Activated CD4-positive, alpha-beta memory T cell treated with anti-CD3 and anti-CD28 coated beads, Interleukin-2, amount 10 ng/mL, durations not matched to agents 7 days and 5 days (primary cell): ENCODE measurements at regions of chr1 and their contacts with region 1.

Region 1: DNA sequence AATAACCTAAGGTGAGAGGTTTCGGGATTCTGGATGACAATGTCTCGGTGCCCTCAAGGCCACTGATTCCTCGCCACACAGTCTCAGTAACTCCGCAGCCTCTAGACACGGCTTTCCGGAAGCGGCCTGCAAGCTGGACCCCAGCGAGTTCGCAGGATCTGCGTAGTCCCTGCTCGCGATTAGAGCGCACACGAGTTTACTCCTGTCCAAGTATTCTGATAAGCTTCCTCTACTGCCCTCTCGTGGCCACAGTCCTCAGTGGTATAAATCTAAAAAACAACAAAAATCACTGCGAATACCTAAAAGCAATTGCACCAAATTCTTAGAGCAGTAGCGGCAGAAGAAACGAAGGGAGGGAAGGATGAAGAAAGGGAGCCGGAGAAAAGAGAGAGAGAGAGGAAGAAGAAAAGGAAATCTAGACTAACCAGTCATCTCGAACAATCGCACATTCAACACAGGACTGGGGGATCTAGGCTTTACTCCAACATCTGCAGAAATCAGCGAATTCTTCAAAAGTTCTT is 1.1 kb upstream of the PLXNA2 start:
- DNase-seq: peak; percentile 81
- H3K4me3 Mint-ChIP-seq: peak overlapping the region; percentile 64
- H3K27ac Mint-ChIP-seq: no peak overlapping the region
- H3K4me1 Mint-ChIP-seq: peaks cover 15% of the 10 kb centered on the region
- H3K27me3 Mint-ChIP-seq: peaks cover 45% of the 10 kb centered on the region

Region 2: DNA sequence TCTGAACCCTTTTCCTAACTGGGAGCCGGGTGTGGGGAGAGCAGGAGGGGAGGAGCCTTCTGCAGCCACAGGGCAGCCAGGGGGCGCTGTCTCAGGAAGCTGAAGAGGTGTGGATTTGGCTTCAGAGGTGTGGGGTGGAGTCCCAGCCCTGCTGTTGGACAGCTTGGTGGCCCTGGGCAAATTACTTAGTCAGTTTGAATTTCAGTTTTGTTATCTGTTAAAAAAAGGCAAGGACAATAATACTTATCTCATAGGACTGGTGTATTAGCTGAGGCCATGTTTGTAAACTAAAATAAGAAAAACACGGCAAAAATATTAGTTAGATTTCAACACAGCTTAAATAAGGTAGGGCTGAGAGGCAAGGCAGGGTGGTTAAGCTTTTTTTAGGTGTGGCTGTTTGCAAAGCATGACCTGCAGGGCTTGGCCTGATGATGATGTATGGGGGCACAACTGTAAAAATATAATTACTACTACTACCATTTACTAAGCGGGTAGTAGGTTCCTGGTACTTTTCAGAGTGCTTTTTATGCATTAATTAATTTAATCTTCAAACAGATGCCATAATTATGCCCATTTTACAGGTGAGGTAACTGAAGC is 112.9 kb before region 1 on chr1:
- CTCF ChIA-PET with region 1: interaction called, 39 read pairs
- POLR2A ChIA-PET with region 1: interaction called, 3 read pairs
- DNase-seq: peak; percentile 65
- H3K4me3 Mint-ChIP-seq: no peak overlapping the region
- H3K27ac Mint-ChIP-seq: no peak overlapping the region
- H3K4me1 Mint-ChIP-seq: peaks cover 4% of the 10 kb centered on the region
- H3K27me3 Mint-ChIP-seq: peaks cover 13% of the 10 kb centered on the region

Region 3: GRCh38 chr1:208233546-208233945 is 11.7 kb before region 1 on chr1:
- CTCF ChIA-PET with region 1: interaction called, 20 read pairs
- POLR2A ChIA-PET with region 1: interaction called, 5 read pairs
- DNase-seq: no peak
- H3K4me3 Mint-ChIP-seq: no peak overlapping the region
- H3K27ac Mint-ChIP-seq: no peak overlapping the region
- H3K4me1 Mint-ChIP-seq: peaks cover 6% of the 10 kb centered on the region
- H3K27me3 Mint-ChIP-seq: peaks cover 58% of the 10 kb centered on the region

Region 4: DNA sequence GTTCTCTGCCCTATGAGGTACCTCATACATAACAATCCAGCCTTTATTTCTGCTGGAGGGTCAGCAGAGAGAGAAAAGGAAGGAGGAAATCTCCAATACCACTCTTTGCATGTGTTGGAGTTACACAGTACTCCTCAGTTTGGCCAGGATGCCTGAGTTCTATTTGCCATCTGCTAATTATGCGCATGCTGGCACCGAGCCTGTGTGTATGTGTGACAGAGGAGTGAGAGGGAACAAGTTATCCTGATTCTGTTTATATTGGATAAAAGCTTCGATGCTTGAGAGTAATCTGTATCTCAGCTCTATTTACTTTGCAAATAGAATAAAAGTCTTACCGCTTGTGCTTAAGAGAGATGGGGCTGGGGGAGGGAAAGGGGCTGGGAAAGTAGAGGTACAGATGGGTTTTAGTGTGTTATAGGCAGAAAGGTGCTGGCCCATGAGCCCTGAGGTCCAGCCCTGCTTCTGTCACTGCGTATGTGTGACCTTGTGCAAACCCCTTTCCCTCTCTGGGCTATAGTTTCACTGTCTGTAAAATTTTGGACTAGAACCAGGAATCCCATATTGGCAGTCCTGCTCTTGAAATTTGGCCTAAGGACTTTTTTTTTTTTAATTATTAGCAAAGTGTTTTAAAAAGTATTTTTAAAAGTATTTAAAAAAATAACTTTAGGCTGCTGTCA is 53.5 kb after region 1 on chr1:
- CTCF ChIA-PET with region 1: no interaction called
- POLR2A ChIA-PET with region 1: no interaction called
- DNase-seq: no peak
- H3K4me3 Mint-ChIP-seq: no peak overlapping the region
- H3K27ac Mint-ChIP-seq: no peak overlapping the region
- H3K4me1 Mint-ChIP-seq: no peaks in the 10 kb centered on the region
- H3K27me3 Mint-ChIP-seq: peaks cover 13% of the 10 kb centered on the region